Mammary epithelial cell (primary cell): ENCODE measurements at regions of chr1 and their contacts with region 1.

Region 1: GRCh38 chr1:1943834-1944570 is 24.9 kb upstream of the TMEM52 start:
- DNase-seq: peak; percentile 17
- H3K4me3 ChIP-seq: no peak overlapping the region
- H3K27ac ChIP-seq: no peak overlapping the region
- H3K4me1 ChIP-seq: peaks cover 8% of the 10 kb centered on the region
- H3K27me3 ChIP-seq: no peaks in the 10 kb centered on the region
- CTCF ChIP-seq: peak; percentile 67 to 78

Region 2: DNA sequence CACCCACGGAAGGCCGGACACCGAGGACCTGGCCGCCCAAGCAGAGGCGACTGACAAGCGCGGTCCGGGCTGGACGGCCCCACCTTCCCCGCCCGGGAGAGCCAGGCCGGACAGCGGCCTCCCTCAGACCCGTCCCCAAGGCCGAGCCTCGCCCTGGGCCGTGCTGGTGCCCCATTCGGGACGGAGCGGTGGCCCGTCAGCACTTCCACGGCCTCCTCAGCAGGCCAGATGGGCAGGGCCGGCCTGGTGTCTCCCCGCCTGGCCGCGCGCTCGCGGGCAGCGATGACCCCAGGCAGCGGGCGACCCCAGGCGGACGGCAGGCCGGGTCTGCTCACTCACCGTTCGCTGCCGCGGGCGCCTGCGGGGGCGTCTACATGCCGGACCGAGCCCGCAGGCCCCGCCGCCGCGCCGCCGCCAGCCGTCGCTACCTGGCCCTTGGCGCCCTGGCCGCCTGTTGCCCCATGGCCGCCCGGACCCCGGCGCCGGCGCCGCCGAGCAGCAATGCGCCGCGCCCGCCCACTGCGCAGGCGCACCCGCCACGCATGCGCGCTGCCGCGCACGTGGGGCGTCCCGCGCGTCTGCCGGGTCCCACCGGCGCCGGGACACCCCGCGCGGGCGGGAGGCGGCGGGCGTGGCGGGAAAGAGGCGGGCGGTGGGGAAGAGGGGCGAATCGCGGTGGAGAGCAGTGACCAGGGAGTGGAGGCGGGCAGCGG is 165.9 kb before region 1 on chr1 and contains the start of gene NADK:
- CTCF ChIA-PET with region 1: no interaction called
- dilution Hi-C with region 1: no loop called
- in situ Hi-C with region 1: no loop called
- intact Hi-C with region 1: no loop called
- DNase-seq: peak; percentile 53
- H3K4me3 ChIP-seq: peak within 1 kb of the TSS; percentile 71 to 97 (median 87)
- H3K27ac ChIP-seq: peak within 1 kb of the TSS; percentile 49
- H3K4me1 ChIP-seq: peaks cover 31% of the 10 kb centered on the region
- H3K27me3 ChIP-seq: no peaks in the 10 kb centered on the region
- CTCF ChIP-seq: no peak
- total RNA-seq, gene NADK: 34.2 to 67.8 TPM

Region 3: GRCh38 chr1:1982379-1983232 is 38.6 kb after region 1 on chr1:
- CTCF ChIA-PET with region 1: no interaction called
- dilution Hi-C with region 1: loop called (anchors 5 kb)
- in situ Hi-C with region 1: no loop called
- intact Hi-C with region 1: no loop called
- DNase-seq: no peak
- H3K4me3 ChIP-seq: no peak overlapping the region
- H3K27ac ChIP-seq: no peak overlapping the region
- H3K4me1 ChIP-seq: no peaks in the 10 kb centered on the region
- H3K27me3 ChIP-seq: no peaks in the 10 kb centered on the region
- CTCF ChIP-seq: no peak